Ovary (tissue), 10 donors: ENCODE measurements at regions of chr10 and their contacts with region 1.

Region 1: DNA sequence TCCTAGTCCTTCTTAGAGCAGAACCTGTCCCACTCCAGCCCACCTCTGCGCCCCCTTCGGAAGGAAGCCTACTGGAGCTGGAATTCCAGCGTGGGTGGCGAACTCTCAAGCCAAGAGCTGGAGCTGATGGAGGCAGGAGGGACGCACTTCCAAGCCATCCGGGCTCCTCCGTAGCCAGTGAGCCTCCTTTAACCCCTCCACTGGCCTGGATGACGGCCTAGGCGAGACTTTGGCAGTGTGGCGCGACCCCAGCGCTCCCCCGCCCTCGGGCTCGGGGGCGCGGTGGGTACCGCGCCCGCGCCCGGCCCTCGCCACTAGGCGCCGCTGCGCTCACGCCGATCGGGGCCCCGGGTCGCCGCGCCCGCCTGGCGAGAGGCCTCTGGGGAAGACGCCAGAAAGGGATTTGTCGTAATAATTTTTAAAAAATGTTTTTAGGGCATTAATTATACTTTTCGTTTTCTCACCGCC is 5.1 kb upstream of the EMX2 start:
- DNase-seq: peak in 4 of 5 donors; percentile 59 to 80 (median 76)
- H3K4me3 ChIP-seq: peak overlapping the region; percentile 37
- H3K27ac ChIP-seq: peak overlapping the region in 1 of 2 donors; percentile 49
- H3K4me1 ChIP-seq: peaks cover 6% of the 10 kb centered on the region
- H3K27me3 ChIP-seq: no peaks in the 10 kb centered on the region
- CTCF ChIP-seq: peak; percentile 45 to 84 (median 79)
- EP300 ChIP-seq: no peak
- POLR2A ChIP-seq: no peak

Region 2: GRCh38 chr10:117226824-117227451 is 310.5 kb before region 1 on chr10:
- intact Hi-C with region 1: no loop called
- DNase-seq: peak in 2 of 5 donors; percentile 20 to 58
- H3K4me3 ChIP-seq: no peak overlapping the region
- H3K27ac ChIP-seq: no peak overlapping the region
- H3K4me1 ChIP-seq: no peaks in the 10 kb centered on the region
- H3K27me3 ChIP-seq: no peaks in the 10 kb centered on the region
- CTCF ChIP-seq: no peak
- EP300 ChIP-seq: no peak
- POLR2A ChIP-seq: no peak

Region 3: GRCh38 chr10:117375360-117376178 is 161.9 kb before region 1 on chr10 and contains the start of gene PDZD8:
- intact Hi-C with region 1: loop called in 1 of 4 experiments (anchors 10 kb)
- DNase-seq: peak; percentile 94 to 98 (median 96)
- H3K4me3 ChIP-seq: peak within 1 kb of the TSS; percentile 77
- H3K27ac ChIP-seq: peak within 1 kb of the TSS; percentile 93
- H3K4me1 ChIP-seq: peaks cover 8% of the 10 kb centered on the region
- H3K27me3 ChIP-seq: no peaks in the 10 kb centered on the region
- CTCF ChIP-seq: peak in 1 of 3 donors; percentile 44
- EP300 ChIP-seq: no peak
- POLR2A ChIP-seq: peak; percentile 87
- total RNA-seq, gene PDZD8: 19.3 to 49.6 (median 39.9) TPM

Region 4: GRCh38 chr10:117442944-117443685 is 94.4 kb before region 1 on chr10:
- intact Hi-C with region 1: loop called in 1 of 4 experiments (anchors 10 kb)
- DNase-seq: peak; percentile 67 to 86 (median 80)
- H3K4me3 ChIP-seq: peak overlapping the region; percentile 16
- H3K27ac ChIP-seq: no peak overlapping the region
- H3K4me1 ChIP-seq: no peaks in the 10 kb centered on the region
- H3K27me3 ChIP-seq: no peaks in the 10 kb centered on the region
- CTCF ChIP-seq: peak; percentile 57 to 77 (median 59)
- EP300 ChIP-seq: no peak
- POLR2A ChIP-seq: no peak

Region 5: GRCh38 chr10:117741524-117741923 is 204.1 kb after region 1 on chr10:
- intact Hi-C with region 1: loop called in 1 of 4 experiments (anchors 10 kb)
- DNase-seq: no peak
- H3K4me3 ChIP-seq: no peak overlapping the region
- H3K27ac ChIP-seq: no peak overlapping the region
- H3K4me1 ChIP-seq: no peaks in the 10 kb centered on the region
- H3K27me3 ChIP-seq: no peaks in the 10 kb centered on the region
- CTCF ChIP-seq: no peak
- EP300 ChIP-seq: no peak
- POLR2A ChIP-seq: no peak

Region 6: GRCh38 chr10:118046395-118047156 is 509.1 kb after region 1 on chr10 and contains the start of gene RAB11FIP2:
- intact Hi-C with region 1: loop called in 2 of 4 experiments (anchors 5 to 10 kb)
- DNase-seq: peak; percentile 96 to 99 (median 98)
- H3K4me3 ChIP-seq: peak within 1 kb of the TSS; percentile 97
- H3K27ac ChIP-seq: peak within 1 kb of the TSS; percentile 60 to 88
- H3K4me1 ChIP-seq: peaks cover 5% of the 10 kb centered on the region
- H3K27me3 ChIP-seq: no peaks in the 10 kb centered on the region
- CTCF ChIP-seq: peak in 1 of 3 donors; percentile 27
- EP300 ChIP-seq: no peak
- POLR2A ChIP-seq: peak; percentile 15
- total RNA-seq, gene RAB11FIP2: 23.2 to 47.8 (median 26.9) TPM

Region 7: DNA sequence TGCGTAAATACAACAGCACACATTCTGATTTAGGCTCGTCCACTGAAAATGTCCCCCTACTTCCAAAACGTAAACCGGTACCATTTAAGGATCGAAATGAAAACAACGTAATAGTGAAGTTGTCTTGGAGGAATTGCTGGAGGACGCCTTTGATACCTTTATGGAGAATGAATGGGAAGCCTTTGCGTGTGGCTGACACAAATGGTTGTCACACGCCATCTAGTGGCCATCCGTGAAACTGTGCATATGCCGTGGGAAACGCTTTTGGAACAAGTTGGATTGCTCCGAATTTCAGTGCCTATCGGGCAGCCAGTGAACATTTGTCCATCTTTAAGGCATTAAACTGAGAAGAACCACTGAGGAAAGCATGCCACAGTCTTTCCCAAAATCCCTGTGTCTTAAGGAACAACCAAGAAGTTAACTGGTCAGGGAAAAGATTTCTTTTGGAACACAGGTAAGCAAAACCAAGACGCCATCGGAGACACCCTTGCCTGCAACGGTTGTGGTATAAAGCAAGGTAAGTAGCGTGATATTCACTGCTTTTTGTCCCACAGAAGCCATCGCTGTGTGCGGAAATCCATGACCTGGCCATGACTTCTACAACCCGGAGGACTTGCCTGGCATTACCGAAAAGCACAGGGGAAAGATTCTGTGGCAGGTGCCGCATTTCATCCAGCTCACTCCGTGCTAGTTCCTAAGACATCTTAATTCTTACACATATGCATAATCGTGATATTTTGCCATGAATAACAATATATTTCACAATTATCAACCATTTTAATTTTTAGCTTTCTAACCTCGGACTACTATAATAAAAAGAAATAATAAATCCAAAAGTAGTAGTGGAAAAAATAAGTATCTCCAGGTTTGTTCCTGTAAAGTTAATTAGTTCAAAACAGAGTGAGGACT is 704.0 kb after region 1 on chr10:
- intact Hi-C with region 1: loop called in 3 of 4 experiments (anchors 2 to 10 kb)
- DNase-seq: peak; percentile 76 to 90 (median 89)
- H3K4me3 ChIP-seq: no peak overlapping the region
- H3K27ac ChIP-seq: no peak overlapping the region
- H3K4me1 ChIP-seq: no peaks in the 10 kb centered on the region
- H3K27me3 ChIP-seq: no peaks in the 10 kb centered on the region
- CTCF ChIP-seq: peak; percentile 81 to 92 (median 85)
- EP300 ChIP-seq: no peak
- POLR2A ChIP-seq: no peak

Region 8: DNA sequence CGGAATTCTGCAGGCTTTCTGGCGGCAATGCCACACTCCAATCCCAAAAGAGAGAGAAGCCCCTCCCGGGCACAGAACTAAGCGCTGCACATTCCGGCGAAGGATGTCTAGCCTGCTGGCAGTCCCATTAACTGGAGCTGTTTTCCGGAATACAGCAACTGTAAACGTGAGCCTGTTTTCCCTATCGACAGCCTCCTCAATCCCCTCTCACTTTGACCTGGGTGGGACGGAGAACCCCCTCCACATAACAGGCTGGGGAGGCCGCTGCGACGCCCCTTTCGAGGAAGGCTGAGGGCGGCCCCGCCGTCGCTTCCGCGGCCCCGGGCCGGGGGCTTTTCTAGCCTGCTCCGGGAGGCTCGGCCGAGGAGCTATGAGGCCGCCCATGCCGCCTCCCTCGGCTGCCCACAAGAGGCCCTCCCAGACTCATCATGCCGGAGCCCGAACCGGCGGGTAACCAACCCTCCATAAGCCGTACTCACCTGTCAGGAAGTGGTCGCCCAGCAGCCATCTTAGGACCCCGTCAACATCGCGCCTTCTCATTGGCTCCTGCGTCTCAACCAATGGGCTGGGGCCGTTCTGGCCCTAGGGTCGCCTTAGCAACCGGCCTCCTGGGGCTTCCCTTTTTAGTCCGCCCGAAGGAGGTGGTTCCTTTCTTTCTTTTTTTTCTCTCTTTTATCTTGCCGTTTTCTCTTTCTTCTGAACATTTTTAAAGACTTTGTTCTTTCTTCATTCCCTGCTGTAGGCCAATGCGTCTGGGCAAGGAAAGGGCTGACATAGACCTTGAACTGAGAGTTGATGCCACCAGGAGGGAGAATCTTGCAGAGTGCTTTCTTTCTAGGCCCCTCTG is 804.5 kb after region 1 on chr10 and contains the start of gene FAM204A:
- intact Hi-C with region 1: loop called in 1 of 4 experiments (anchors 10 kb)
- DNase-seq: peak; percentile 90 to 97 (median 95)
- H3K4me3 ChIP-seq: peak within 1 kb of the TSS; percentile 91
- H3K27ac ChIP-seq: peak within 1 kb of the TSS; percentile 54 to 67
- H3K4me1 ChIP-seq: peaks cover 7% of the 10 kb centered on the region
- H3K27me3 ChIP-seq: no peaks in the 10 kb centered on the region
- CTCF ChIP-seq: no peak
- EP300 ChIP-seq: no peak
- POLR2A ChIP-seq: peak; percentile 31
- total RNA-seq, gene FAM204A: 22.9 to 82.1 (median 71.2) TPM

Region 9: DNA sequence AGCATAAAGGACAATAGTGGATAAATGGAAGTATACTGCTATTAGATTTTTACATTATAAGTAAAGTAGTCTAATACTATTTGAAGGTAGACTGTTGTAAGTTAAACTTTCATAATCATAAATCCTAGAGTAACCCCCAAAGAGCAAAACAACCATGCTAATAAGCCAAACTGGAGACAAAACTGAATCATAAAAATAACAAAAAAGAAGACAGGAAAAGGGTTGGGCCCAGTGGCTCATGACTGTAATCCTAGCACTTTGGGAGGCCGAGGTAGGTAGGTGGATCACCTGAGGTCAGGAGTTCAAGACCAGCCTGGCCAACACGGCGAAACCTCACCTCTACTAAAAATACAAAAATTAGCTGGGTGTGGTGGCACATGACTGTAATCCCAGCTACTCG is 1207.6 kb after region 1 on chr10:
- intact Hi-C with region 1: no loop called
- DNase-seq: no peak
- H3K4me3 ChIP-seq: no peak overlapping the region
- H3K27ac ChIP-seq: no peak overlapping the region
- H3K4me1 ChIP-seq: peaks cover 5% of the 10 kb centered on the region
- H3K27me3 ChIP-seq: no peaks in the 10 kb centered on the region
- CTCF ChIP-seq: no peak
- EP300 ChIP-seq: no peak
- POLR2A ChIP-seq: no peak